ENCODE measurements at regions of chr19 and their contacts with region 1.

Region 1: GRCh38 chr19:6297202-6297601 is 17.4 kb upstream of the MLLT1 start:
- DNase-seq: no peak
- H3K4me3 ChIP-seq: no peak overlapping the region
- H3K27ac ChIP-seq: no peak overlapping the region
- H3K4me1 ChIP-seq: no peaks in the 10 kb centered on the region
- H3K27me3 ChIP-seq: peaks cover 8% of the 10 kb centered on the region
- CTCF ChIP-seq: no peak

Region 2: DNA sequence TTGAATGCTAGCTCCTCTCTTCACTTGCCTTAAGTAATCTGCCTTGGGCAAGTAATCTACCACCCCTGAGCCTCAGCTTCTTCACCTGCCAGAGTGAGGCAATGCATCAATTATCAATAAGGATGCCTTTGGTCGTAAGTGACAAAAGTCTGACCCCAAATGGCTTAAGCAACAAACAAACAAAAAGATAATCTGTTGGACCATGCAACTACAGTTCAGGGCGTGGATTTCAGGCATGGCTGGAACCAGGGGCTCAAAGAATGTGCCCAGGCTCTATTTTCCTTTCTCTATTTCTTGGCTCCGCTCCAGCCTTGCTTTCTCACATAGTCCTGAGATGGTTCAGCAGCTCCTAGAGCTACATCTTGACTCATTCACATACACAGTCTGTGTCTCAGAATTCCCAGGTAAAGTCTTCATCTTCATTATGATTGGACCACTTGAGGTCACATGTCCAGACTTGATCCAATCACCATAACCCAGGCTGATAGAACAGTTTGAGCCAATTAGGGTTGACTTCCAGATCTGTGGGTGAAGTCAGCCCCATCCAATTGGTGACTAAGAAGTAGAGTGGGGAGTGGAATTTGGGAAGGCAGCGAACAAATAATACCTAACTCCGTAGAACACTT is 132.2 kb before region 1 on chr19:
- intact Hi-C with region 1: loop called (anchors 5 kb)
- DNase-seq: no peak
- H3K4me3 ChIP-seq: no peak overlapping the region
- H3K27ac ChIP-seq: no peak overlapping the region
- H3K4me1 ChIP-seq: peaks cover 3% of the 10 kb centered on the region
- H3K27me3 ChIP-seq: no peaks in the 10 kb centered on the region
- CTCF ChIP-seq: no peak

Region 3: DNA sequence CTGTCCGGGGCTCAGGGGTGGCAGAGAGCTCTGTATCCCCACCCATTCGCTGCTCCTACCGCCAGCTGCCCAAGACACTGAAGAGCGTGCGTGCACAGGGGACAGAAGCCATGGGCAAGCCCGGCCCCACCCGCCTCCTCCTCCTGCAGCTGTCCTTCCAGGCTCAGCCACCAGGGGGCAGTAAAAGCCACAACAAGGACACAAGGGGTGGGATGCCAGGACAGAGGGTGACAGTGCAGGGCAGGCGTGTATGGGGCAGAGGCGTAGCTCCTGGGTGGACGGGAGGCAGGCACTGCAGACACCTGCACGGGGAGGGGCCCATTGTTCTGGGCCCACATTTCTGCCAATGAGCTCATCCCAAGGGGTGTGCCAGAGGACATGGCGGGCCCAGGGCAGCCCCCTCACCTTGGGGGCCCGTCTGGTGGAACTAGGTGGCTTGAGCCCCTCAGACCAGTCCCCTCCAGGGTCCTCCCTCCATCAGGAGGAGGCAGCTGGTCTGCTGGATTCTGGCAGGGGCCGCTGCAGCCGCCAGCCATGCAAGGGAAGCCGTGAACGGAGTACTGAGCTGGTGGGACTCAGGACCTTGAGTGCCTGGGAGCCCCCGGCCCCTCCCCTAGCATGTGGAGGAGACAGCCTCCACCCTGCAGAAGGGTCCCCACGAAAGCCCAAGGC is 78.6 kb before region 1 on chr19:
- intact Hi-C with region 1: loop called (anchors 5 kb)
- DNase-seq: peak; percentile 88
- H3K4me3 ChIP-seq: no peak overlapping the region
- H3K27ac ChIP-seq: peak overlapping the region; percentile 63
- H3K4me1 ChIP-seq: peaks cover 66% of the 10 kb centered on the region
- H3K27me3 ChIP-seq: no peaks in the 10 kb centered on the region
- CTCF ChIP-seq: peak; percentile 96

Region 4: GRCh38 chr19:6249296-6249695 is 47.9 kb before region 1 on chr19:
- intact Hi-C with region 1: no loop called
- DNase-seq: no peak
- H3K4me3 ChIP-seq: no peak overlapping the region
- H3K27ac ChIP-seq: peak overlapping the region; percentile 56
- H3K4me1 ChIP-seq: peaks cover 41% of the 10 kb centered on the region
- H3K27me3 ChIP-seq: no peaks in the 10 kb centered on the region
- CTCF ChIP-seq: no peak

Measured in left ventricle myocardium inferior (tissue), 1 donor.